CD14-positive monocyte (primary cell): ENCODE measurements at regions of chr19 and their contacts with region 1.

Region 1: GRCh38 chr19:43446746-43447489 is 18.5 kb downstream of the LYPD3 start:
- DNase-seq: peak; percentile 70 to 77 (median 77)
- H3K4me3 ChIP-seq: no peak overlapping the region
- H3K4me3 Mint-ChIP-seq: no peak overlapping the region
- H3K27ac ChIP-seq: no peak overlapping the region
- H3K27ac Mint-ChIP-seq: peak overlapping the region in 2 of 7 donors; percentile 25 to 32
- H3K4me1 ChIP-seq: peaks cover 32 to 33% of the 10 kb centered on the region in 2 donors
- H3K4me1 Mint-ChIP-seq: peaks cover 25% of the 10 kb centered on the region
- H3K27me3 ChIP-seq: no peaks in the 10 kb centered on the region
- H3K27me3 Mint-ChIP-seq: peaks cover 7 to 12% (median 8%) of the 10 kb centered on the region in 3 donors
- CTCF ChIP-seq: peak; percentile 92

Region 2: DNA sequence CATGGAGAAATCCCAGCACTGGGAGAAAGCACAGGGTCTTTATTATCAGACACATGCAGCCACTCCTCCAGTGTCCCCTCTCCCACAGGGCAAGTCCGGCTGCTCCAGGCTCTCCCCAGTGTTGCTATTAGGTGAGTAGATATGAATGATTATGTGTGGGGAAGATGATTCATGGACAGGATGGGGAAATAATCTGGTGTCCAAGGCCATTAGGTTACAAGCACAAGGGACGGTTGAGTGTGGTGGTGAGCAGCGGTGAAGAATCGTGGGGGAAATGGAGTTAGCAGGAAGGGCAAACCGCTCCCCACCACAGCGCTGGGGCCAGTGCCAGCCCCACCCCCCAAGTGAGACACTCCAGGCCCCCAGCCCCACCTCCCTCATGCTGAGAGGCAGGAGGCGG is 74.5 kb before region 1 on chr19:
- intact Hi-C with region 1: no loop called
- DNase-seq: no peak
- H3K4me3 ChIP-seq: no peak overlapping the region
- H3K4me3 Mint-ChIP-seq: no peak overlapping the region
- H3K27ac ChIP-seq: no peak overlapping the region
- H3K27ac Mint-ChIP-seq: peak overlapping the region in 2 of 7 donors; percentile 11 to 79
- H3K4me1 ChIP-seq: no peaks in the 10 kb centered on the region
- H3K4me1 Mint-ChIP-seq: peaks cover 3% of the 10 kb centered on the region
- H3K27me3 ChIP-seq: no peaks in the 10 kb centered on the region
- H3K27me3 Mint-ChIP-seq: peaks cover 3 to 6% (median 3%) of the 10 kb centered on the region in 3 donors
- CTCF ChIP-seq: no peak

Region 3: DNA sequence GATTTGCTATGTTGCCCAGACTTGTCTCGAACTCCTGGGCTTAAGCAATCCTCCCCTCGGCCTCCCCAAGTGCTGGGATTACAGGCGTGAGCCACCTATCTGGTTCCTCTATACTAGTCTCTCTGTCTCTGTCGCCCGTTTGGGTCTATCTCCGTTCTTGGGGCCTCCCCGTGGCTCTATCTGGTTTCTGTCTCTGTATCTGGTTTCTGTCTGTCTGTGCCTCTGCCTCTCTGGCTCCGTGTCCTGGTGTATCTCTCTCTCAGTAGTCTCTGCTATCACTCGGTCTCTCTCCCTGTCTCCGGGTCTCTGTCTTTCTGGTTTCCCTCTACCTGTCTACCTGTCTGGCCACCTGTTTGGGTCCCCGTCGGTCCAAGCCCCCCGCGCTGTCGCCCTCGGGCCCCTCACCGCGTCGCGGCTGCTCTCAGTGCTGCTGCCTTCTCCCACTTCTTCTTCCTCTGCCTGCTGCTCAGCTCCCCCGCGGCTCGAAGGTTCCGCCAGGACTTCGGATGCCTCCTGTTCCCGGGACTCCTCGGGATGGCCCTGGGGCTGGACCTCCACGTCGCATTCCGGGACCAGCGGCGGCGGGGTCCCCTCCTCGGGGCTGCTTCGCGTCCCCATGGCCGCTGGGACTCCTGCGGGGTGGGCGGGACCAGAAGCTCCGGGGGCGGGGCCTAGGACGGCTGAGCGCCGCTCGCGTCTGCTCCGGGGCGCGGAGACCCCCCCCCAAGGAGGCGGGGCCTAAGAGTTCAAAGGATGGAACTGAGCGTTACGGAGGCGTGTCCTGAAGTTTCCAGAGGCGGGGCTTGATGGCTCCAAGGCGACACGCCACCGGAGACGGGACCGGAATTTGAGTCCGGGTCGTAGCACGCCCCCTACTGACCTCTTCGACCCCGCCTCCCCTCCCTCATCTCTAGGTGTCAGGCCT is 56.8 kb after region 1 on chr19:
- intact Hi-C with region 1: loop called in 1 of 2 experiments (anchors 5 kb)
- DNase-seq: peak; percentile 88 to 94 (median 92)
- H3K4me3 ChIP-seq: peak overlapping the region; percentile 58 to 89 (median 73)
- H3K4me3 Mint-ChIP-seq: peak overlapping the region; percentile 96 to 97
- H3K27ac ChIP-seq: peak overlapping the region; percentile 68 to 74
- H3K27ac Mint-ChIP-seq: peak overlapping the region; percentile 82 to 96 (median 91)
- H3K4me1 ChIP-seq: peaks cover 18 to 28% of the 10 kb centered on the region in 2 donors
- H3K4me1 Mint-ChIP-seq: peaks cover 22% of the 10 kb centered on the region
- H3K27me3 ChIP-seq: no peaks in the 10 kb centered on the region
- H3K27me3 Mint-ChIP-seq: peaks cover 2 to 9% (median 5%) of the 10 kb centered on the region in 3 donors
- CTCF ChIP-seq: no peak

Region 4: GRCh38 chr19:43519436-43520088 is 72.6 kb after region 1 on chr19:
- intact Hi-C with region 1: loop called (anchors 1 to 5 kb)
- DNase-seq: peak; percentile 68 to 78 (median 73)
- H3K4me3 ChIP-seq: no peak overlapping the region
- H3K4me3 Mint-ChIP-seq: no peak overlapping the region
- H3K27ac ChIP-seq: no peak overlapping the region
- H3K27ac Mint-ChIP-seq: peak overlapping the region in 4 of 7 donors; percentile 10 to 86 (median 68)
- H3K4me1 ChIP-seq: peaks cover 28 to 29% of the 10 kb centered on the region in 2 donors
- H3K4me1 Mint-ChIP-seq: peaks cover 33% of the 10 kb centered on the region
- H3K27me3 ChIP-seq: no peaks in the 10 kb centered on the region
- H3K27me3 Mint-ChIP-seq: no peaks in the 10 kb centered on the region
- CTCF ChIP-seq: peak; percentile 87

Region 5: GRCh38 chr19:43809762-43810696 is 363.1 kb after region 1 on chr19:
- intact Hi-C with region 1: loop called in 1 of 2 experiments (anchors 10 kb)
- DNase-seq: peak; percentile 45 to 68 (median 63)
- H3K4me3 ChIP-seq: no peak overlapping the region
- H3K4me3 Mint-ChIP-seq: no peak overlapping the region
- H3K27ac ChIP-seq: no peak overlapping the region
- H3K27ac Mint-ChIP-seq: no peak overlapping the region
- H3K4me1 ChIP-seq: no peaks in the 10 kb centered on the region
- H3K4me1 Mint-ChIP-seq: no peaks in the 10 kb centered on the region
- H3K27me3 ChIP-seq: no peaks in the 10 kb centered on the region
- H3K27me3 Mint-ChIP-seq: peaks cover 18 to 21% (median 20%) of the 10 kb centered on the region in 3 donors
- CTCF ChIP-seq: peak; percentile 77